ENCODE measurements at regions of chr2 and their contacts with region 1.

Region 1: DNA sequence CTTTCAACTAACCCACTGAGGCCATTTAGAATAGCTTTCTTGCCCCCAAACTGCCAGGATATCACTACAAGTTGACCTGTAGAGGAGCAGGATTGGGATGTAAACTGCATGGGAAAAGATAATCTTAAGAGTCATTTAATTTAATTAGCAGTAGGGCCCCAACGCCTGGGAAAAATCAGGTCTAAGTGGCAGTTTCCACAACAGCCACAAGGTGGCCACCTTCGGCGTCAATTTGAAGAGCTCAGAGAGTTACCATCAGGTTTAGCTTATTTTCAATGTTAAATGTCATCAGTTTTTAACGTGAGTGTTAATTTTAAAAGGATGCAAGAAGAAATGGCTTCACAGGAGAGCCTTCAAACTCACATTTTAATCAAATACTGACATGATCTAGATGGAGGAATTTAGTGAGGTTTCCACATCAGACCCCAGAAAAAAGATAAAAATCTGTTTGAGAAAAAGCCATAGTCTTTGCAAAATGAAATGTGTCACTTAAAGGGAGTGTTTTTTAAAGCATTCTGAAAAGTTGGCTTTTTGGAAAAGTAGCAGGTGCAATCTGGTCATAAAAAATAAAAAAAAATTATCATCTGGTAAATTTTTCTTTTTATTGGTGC is 77.3 kb upstream of the UPP2 start:
- DNase-seq: peak; percentile 31
- CTCF ChIP-seq: peak; percentile 80

Region 2: DNA sequence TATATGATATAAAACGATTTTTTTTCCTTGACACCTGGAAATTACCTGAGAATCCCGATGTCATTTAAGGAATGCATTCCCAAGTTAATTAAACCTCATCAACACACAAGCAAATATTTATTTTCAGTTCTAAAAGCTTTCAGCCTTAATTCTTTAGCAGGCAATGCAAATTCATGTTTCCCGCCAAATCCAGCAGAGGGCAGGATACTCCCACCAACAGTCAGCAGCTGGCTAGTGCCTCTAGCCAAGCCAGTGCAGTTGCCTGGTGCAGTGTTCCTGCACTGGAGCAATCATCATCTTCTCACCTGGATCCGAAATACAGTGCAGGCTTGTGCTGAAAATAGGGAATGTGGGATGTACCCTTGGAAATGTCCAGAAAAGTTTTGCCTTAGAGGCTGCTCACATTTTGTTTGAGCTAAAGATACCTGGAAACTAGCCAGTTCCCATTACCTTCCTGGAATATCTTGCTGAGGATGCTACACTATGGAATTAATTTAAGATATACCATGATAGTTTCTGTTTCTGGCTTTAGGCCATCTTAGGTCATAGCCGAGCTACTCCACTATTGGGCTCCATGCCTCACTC is 532.1 kb before region 1 on chr2:
- in situ Hi-C with region 1: loop called (anchors 25 kb)
- DNase-seq: peak; percentile 55
- CTCF ChIP-seq: peak; percentile 89

Region 3: GRCh38 chr2:157672129-157672528 is 352.3 kb before region 1 on chr2:
- in situ Hi-C with region 1: no loop called
- DNase-seq: no peak
- CTCF ChIP-seq: no peak

Region 4: DNA sequence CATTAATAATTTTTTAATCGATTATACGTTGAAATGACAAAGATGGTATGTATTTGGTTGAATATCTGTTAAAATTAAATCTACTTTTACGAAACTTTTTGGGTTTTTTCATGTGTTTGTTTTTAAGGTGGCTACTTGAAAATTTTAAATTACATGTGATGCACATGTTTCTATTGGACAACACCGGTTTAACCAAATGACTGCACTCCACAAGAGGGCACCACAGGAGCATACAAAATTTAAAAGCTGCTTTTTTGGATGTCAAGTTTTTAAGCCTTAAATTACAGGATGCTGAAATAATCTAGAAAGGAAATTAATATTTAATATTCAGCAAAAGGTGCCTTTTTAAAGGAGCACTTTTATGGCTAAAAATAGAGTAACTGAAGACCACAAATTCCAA is 247.0 kb before region 1 on chr2:
- in situ Hi-C with region 1: loop called (anchors 25 kb)
- DNase-seq: peak; percentile 19
- CTCF ChIP-seq: peak; percentile 42